ENCODE measurements at regions of chr11 and their contacts with region 1.

Region 1: DNA sequence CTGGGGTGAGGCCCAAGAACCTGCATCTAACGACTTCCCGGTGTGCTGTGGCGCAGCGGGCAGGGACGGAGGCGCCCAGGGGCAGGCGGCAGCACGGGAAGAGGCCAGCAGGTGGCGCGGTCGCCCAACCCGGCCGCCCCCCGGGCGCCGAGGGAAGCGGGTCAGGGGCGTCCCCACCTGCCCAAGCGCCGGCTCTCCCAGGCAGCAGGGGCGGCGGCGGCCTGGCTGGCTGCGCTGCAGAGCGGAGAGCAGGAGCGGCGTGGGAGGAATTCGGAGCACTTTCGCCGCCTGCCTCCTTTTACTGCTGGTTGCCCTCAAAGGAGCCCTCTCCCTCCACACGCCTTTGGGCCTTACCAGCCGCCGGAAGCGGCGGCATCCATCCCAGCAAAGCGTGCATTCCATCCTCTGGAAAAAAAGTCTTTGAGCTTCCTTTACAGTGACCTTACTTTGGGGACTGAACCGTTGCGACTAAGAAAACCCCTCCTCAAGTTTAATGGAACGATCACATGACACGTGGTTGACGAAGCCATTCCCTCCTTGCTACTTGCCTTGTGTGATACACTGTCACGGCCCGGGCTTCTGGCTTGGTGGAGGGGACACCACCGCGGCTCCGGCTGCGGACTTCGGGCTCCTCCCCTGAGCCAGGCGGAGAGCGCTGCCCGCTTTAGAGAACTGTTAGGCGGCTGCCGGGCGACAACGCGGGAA is 106.8 kb upstream of the CLMP start:
- DNase-seq: peak; percentile 41 to 77 (median 69)
- ATAC-seq: peak; percentile 97
- H3K4me3 ChIP-seq: no peak overlapping the region
- H3K27ac ChIP-seq: no peak overlapping the region
- H3K4me1 ChIP-seq: peaks cover 0 to 9% of the 10 kb centered on the region in 2 experiments; a peak in 1 of 5 replicates
- H3K27me3 ChIP-seq: peaks cover 0 to 25% of the 10 kb centered on the region in 2 experiments; a peak in 2 of 5 replicates
- CTCF ChIP-seq: peak; percentile 57 to 80 (median 70)
- EP300 ChIP-seq: no peak
- POLR2A ChIP-seq: no peak
- RAD21 ChIP-seq: peak; percentile 21 to 54; a peak in 2 of 4 replicates

Region 2: DNA sequence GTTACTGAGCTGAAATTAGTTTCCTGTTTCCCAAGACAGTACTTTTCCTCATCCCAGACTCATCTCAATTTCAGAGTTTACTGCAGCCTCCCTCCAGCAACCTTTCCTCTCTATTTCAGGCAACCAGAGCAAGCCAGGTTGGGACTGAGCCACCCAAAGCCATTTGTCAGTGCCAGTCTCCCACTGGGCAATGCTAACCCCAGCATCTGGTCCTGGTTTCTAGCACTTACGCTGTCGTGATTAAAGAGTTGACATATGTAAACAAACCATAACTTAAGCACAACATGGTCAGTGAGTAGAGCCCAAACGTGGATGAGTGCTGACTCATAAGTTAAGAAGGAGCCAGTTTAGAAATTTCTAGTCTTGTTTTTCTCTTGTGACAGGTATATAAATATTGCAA is 1066.2 kb before region 1 on chr11:
- CTCF ChIA-PET with region 1: no interaction called
- POLR2A ChIA-PET with region 1: no interaction called
- in situ Hi-C with region 1: no loop called
- intact Hi-C with region 1: no loop called
- DNase-seq: no peak
- ATAC-seq: no peak
- H3K4me3 ChIP-seq: no peak overlapping the region
- H3K27ac ChIP-seq: no peak overlapping the region
- H3K4me1 ChIP-seq: no peaks in the 10 kb centered on the region
- H3K27me3 ChIP-seq: no peaks in the 10 kb centered on the region
- CTCF ChIP-seq: no peak
- EP300 ChIP-seq: no peak
- POLR2A ChIP-seq: no peak
- RAD21 ChIP-seq: no peak

Region 3: DNA sequence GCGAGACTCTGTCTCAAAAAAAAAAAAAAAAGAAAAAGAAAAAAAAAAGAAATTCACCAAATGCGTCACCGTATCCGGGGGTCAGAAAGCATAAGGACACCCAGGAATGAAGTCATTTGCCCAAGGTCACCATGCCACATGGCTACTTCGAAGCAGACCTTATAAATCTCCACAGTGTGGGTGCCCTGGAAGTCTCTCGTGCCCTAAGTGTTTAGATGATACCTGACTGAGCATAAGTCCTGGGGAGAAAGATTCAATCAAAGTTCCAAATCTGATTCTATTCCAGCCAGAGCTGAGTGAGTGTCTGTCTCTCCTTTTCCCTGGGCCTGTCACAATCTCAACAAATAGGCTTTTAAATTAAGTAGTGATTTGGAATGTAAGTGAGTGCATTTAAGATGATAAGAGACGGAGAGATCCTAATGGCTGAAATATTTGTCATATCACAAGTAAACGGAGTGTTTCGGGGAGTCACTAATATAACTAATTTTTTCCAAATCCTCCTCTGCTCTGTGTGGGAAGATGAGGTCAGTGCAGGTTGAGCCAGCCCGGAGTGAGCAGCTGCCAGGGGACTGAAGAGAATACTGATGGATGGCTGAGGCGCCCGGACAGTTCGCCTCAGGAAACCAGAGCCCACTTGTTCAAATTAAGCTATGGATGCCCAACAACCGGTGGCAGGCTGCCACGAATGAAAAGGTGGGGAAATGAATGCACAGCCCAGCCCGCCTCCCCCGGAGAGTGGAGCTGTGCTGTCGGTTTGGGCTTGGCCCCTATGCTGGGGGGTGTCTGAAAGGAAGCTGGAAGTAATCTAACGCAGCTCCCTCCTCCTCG is 262.0 kb before region 1 on chr11:
- CTCF ChIA-PET with region 1: no interaction called
- POLR2A ChIA-PET with region 1: no interaction called
- in situ Hi-C with region 1: no loop called
- intact Hi-C with region 1: no loop called
- DNase-seq: no peak
- ATAC-seq: no peak
- H3K4me3 ChIP-seq: no peak overlapping the region
- H3K27ac ChIP-seq: no peak overlapping the region
- H3K4me1 ChIP-seq: no peaks in the 10 kb centered on the region; a peak in 1 of 5 replicates
- H3K27me3 ChIP-seq: peaks cover 0 to 18% of the 10 kb centered on the region in 2 experiments; a peak in 3 of 5 replicates
- CTCF ChIP-seq: no peak
- EP300 ChIP-seq: no peak
- POLR2A ChIP-seq: no peak
- RAD21 ChIP-seq: no peak

Region 4: DNA sequence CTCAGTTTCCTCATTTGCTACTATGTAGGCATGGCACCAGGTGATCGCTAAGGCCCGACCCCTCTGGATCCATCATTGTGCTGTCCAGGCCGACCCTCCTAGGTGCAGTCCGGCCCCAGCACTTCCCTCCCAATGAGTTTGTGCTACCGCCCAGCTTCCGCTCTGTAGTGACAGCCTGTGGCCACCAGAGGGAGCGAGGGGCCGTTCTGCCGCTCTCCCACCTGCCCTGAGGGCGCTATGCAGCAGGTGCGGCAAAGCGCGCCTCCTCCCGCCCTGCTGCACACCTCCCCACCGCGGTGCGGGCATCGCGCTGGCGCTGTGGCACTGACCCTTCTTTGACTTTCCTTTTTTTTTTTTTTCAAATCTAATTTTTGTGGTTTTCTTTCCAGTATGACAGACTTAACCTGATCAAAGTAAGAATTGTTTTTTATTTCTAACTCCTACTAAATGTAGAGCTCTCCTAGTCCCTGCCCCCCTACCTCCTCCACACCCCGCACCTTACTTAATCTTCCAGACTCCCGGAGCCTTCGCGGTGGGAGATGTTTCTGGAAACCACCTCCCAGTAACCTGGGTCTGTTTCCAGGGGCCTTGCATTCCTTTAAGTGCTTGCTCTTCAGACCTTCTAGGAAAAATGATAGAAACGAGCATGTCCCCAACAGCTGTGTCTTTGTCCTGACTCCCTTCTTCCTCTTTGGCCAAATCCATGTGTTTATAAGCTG is 278.9 kb after region 1 on chr11:
- CTCF ChIA-PET with region 1: interaction called, 3 read pairs
- POLR2A ChIA-PET with region 1: no interaction called
- in situ Hi-C with region 1: no loop called
- intact Hi-C with region 1: loop called (anchors 5 kb)
- DNase-seq: peak; percentile 67 to 89 (median 80)
- ATAC-seq: peak; percentile 94
- H3K4me3 ChIP-seq: no peak overlapping the region
- H3K27ac ChIP-seq: no peak overlapping the region
- H3K4me1 ChIP-seq: peaks cover 0 to 10% of the 10 kb centered on the region in 2 experiments; a peak in 1 of 5 replicates
- H3K27me3 ChIP-seq: peaks cover 0 to 31% of the 10 kb centered on the region in 2 experiments; a peak in 1 of 5 replicates
- CTCF ChIP-seq: peak; percentile 84 to 97 (median 89)
- EP300 ChIP-seq: no peak
- POLR2A ChIP-seq: no peak
- RAD21 ChIP-seq: peak; percentile 36 to 65

Region 5: DNA sequence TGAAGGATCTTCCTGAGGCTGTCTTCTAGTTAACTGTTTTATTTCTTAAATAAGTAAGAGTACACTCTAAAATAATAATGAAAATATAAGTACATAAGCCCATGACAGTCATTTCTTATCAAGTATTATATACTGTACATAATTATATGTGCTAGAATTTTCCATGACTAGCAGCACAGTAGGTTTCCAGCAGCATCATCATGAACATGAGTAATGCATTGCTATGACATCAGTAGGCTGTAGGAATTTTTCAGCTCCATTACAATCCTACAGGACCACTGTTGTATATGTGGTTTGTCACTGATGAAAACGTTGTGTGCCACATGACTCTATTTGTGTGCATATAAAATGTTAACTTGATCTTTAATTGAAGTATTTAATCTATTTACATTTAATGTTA is 417.6 kb after region 1 on chr11:
- CTCF ChIA-PET with region 1: no interaction called
- POLR2A ChIA-PET with region 1: no interaction called
- in situ Hi-C with region 1: no loop called
- intact Hi-C with region 1: no loop called
- DNase-seq: no peak
- ATAC-seq: no peak
- H3K4me3 ChIP-seq: no peak overlapping the region
- H3K27ac ChIP-seq: no peak overlapping the region
- H3K4me1 ChIP-seq: no peaks in the 10 kb centered on the region
- H3K27me3 ChIP-seq: 0 out of 5 replicates have a peak, but pooled peaks cover 0 to 6% of the 10 kb centered on the region in 2 experiments
- CTCF ChIP-seq: no peak
- EP300 ChIP-seq: no peak
- POLR2A ChIP-seq: no peak
- RAD21 ChIP-seq: no peak

Measured in K562 (cell line).